B cell (primary cell): ENCODE measurements at regions of chr1 and their contacts with region 1.

Region 1: GRCh38 chr1:19240673-19241538 is 10.4 kb downstream of the EMC1 start:
- DNase-seq: peak; percentile 69
- ATAC-seq: peak; percentile 94
- H3K4me3 ChIP-seq: no peak overlapping the region
- H3K4me3 Mint-ChIP-seq: no peak overlapping the region
- H3K27ac ChIP-seq: no peak overlapping the region
- H3K27ac Mint-ChIP-seq: no peak overlapping the region
- H3K4me1 ChIP-seq: no peaks in the 10 kb centered on the region
- H3K4me1 Mint-ChIP-seq: no peaks in the 10 kb centered on the region
- H3K27me3 ChIP-seq: no peaks in the 10 kb centered on the region
- H3K27me3 Mint-ChIP-seq: no peaks in the 10 kb centered on the region
- CTCF ChIP-seq: peak; percentile 95

Region 2: GRCh38 chr1:18668796-18669404 is 572.0 kb before region 1 on chr1:
- CTCF ChIA-PET with region 1: no interaction called
- POLR2A ChIA-PET with region 1: no interaction called
- intact Hi-C with region 1: no loop called
- DNase-seq: no peak
- ATAC-seq: no peak
- H3K4me3 ChIP-seq: no peak overlapping the region
- H3K4me3 Mint-ChIP-seq: no peak overlapping the region
- H3K27ac ChIP-seq: no peak overlapping the region
- H3K27ac Mint-ChIP-seq: no peak overlapping the region
- H3K4me1 ChIP-seq: no peaks in the 10 kb centered on the region
- H3K4me1 Mint-ChIP-seq: no peaks in the 10 kb centered on the region
- H3K27me3 ChIP-seq: peaks cover 0 to 2% (median 0%) of the 10 kb centered on the region in 4 experiments
- H3K27me3 Mint-ChIP-seq: peaks cover 34% of the 10 kb centered on the region
- CTCF ChIP-seq: no peak

Region 3: GRCh38 chr1:19179597-19180264 is 61.2 kb before region 1 on chr1:
- CTCF ChIA-PET with region 1: interaction called, 12 read pairs
- POLR2A ChIA-PET with region 1: no interaction called
- intact Hi-C with region 1: loop called (anchors 1 kb)
- DNase-seq: peak; percentile 29
- ATAC-seq: no peak
- H3K4me3 ChIP-seq: no peak overlapping the region
- H3K4me3 Mint-ChIP-seq: no peak overlapping the region
- H3K27ac ChIP-seq: peak overlapping the region in 1 of 2 donors; percentile 9
- H3K27ac Mint-ChIP-seq: no peak overlapping the region
- H3K4me1 ChIP-seq: no peaks in the 10 kb centered on the region
- H3K4me1 Mint-ChIP-seq: no peaks in the 10 kb centered on the region
- H3K27me3 ChIP-seq: no peaks in the 10 kb centered on the region
- H3K27me3 Mint-ChIP-seq: no peaks in the 10 kb centered on the region
- CTCF ChIP-seq: peak; percentile 29

Region 4: GRCh38 chr1:19209990-19210771 is 30.7 kb before region 1 on chr1 and contains the start of gene UBR4:
- CTCF ChIA-PET with region 1: interaction called, 4 read pairs
- POLR2A ChIA-PET with region 1: no interaction called
- intact Hi-C with region 1: loop called (anchors 1 kb)
- DNase-seq: peak; percentile 98
- ATAC-seq: peak; percentile 87
- H3K4me3 ChIP-seq: peak within 1 kb of the TSS; percentile 79 to 93 (median 88)
- H3K4me3 Mint-ChIP-seq: peak within 1 kb of the TSS; percentile 93
- H3K27ac ChIP-seq: peak within 1 kb of the TSS; percentile 89 to 94
- H3K27ac Mint-ChIP-seq: peak within 1 kb of the TSS; percentile 94
- H3K4me1 ChIP-seq: peaks cover 32 to 37% of the 10 kb centered on the region in 2 donors
- H3K4me1 Mint-ChIP-seq: peaks cover 58% of the 10 kb centered on the region
- H3K27me3 ChIP-seq: no peaks in the 10 kb centered on the region
- H3K27me3 Mint-ChIP-seq: no peaks in the 10 kb centered on the region
- CTCF ChIP-seq: no peak
- total RNA-seq, gene UBR4: 190 and 205 TPM in 2 replicates

Region 5: GRCh38 chr1:19251305-19252196 is 10.6 kb after region 1 on chr1 and contains the starts of genes EMC1 and MRTO4:
- CTCF ChIA-PET with region 1: interaction called, 4 read pairs
- POLR2A ChIA-PET with region 1: no interaction called
- intact Hi-C with region 1: loop called (anchors 1 kb)
- DNase-seq: peak; percentile 93
- ATAC-seq: peak; percentile 94
- H3K4me3 ChIP-seq: peak within 1 kb of the TSS; percentile 46 to 82 (median 79)
- H3K4me3 Mint-ChIP-seq: peak within 1 kb of the TSS; percentile 98
- H3K27ac ChIP-seq: peak within 1 kb of the TSS; percentile 90 to 95
- H3K27ac Mint-ChIP-seq: peak within 1 kb of the TSS; percentile 97
- H3K4me1 ChIP-seq: peaks cover 21 to 37% of the 10 kb centered on the region in 2 donors
- H3K4me1 Mint-ChIP-seq: peaks cover 30% of the 10 kb centered on the region
- H3K27me3 ChIP-seq: no peaks in the 10 kb centered on the region
- H3K27me3 Mint-ChIP-seq: no peaks in the 10 kb centered on the region
- CTCF ChIP-seq: no peak
- total RNA-seq, gene EMC1: 43.3 and 45.5 TPM in 2 replicates
- total RNA-seq, gene MRTO4: 20.2 and 28.1 TPM in 2 replicates

Region 6: DNA sequence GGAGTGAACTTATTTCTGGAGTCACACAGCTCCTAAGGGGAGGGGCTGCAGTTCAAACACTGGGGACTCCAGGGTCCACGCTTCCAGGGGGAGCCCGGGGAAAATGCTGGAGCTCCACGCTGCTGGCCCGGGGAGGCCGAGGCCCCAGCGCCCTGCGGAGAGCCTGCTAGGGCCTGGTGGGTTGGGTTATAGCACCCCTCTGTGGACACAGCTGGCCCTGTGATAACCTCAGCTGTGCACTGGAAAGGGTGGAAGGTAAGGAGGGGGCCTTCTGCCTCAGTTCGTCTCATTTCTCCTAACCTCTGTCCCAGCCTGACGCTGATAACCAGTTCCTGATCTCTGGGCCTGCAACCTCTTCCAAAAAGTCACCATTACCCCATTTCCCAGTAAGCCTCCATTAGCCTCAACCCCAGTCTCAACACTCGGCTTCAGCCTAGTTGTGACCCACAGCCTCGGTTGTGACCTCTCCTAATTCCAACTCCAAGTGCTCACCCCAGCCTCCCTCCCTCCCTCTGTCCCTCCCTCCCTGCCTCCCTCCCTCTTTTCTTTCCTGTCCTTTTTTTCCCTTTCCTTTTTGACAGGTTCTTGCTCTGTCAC is 410.3 kb after region 1 on chr1:
- CTCF ChIA-PET with region 1: no interaction called
- POLR2A ChIA-PET with region 1: no interaction called
- intact Hi-C with region 1: loop called (anchors 2 kb)
- DNase-seq: peak; percentile 57
- ATAC-seq: peak; percentile 48
- H3K4me3 ChIP-seq: no peak overlapping the region
- H3K4me3 Mint-ChIP-seq: no peak overlapping the region
- H3K27ac ChIP-seq: no peak overlapping the region
- H3K27ac Mint-ChIP-seq: no peak overlapping the region
- H3K4me1 ChIP-seq: peaks cover 0 to 6% of the 10 kb centered on the region in 2 donors
- H3K4me1 Mint-ChIP-seq: peaks cover 2% of the 10 kb centered on the region
- H3K27me3 ChIP-seq: peaks cover 0 to 16% (median 1%) of the 10 kb centered on the region in 4 experiments
- H3K27me3 Mint-ChIP-seq: peaks cover 28% of the 10 kb centered on the region
- CTCF ChIP-seq: peak; percentile 54